K562 (cell line): ENCODE measurements at regions of chr19 and their contacts with region 1.

Region 1: GRCh38 chr19:7943444-7944176 is at the start of gene TIMM44:
- DNase-seq: peak; percentile 97 to 99 (median 98)
- ATAC-seq: peak; percentile 99
- H3K4me3 ChIP-seq: peak within 1 kb of the TSS; percentile 64
- H3K27ac ChIP-seq: peak within 1 kb of the TSS; percentile 94
- H3K4me1 ChIP-seq: peaks cover 11 to 28% of the 10 kb centered on the region in 2 experiments; a peak in 4 of 5 replicates
- H3K27me3 ChIP-seq: no peaks in the 10 kb centered on the region
- CTCF ChIP-seq: no peak
- EP300 ChIP-seq: peak; percentile 2; the same call in 1 of the 2 replicates
- POLR2A ChIP-seq: peak; percentile 95
- RAD21 ChIP-seq: peak in 1 of 2 experiments; percentile 6; a peak in 1 of 4 replicates
- polyA plus RNA-seq, gene TIMM44: 10.3 to 19.6 TPM

Region 2: DNA sequence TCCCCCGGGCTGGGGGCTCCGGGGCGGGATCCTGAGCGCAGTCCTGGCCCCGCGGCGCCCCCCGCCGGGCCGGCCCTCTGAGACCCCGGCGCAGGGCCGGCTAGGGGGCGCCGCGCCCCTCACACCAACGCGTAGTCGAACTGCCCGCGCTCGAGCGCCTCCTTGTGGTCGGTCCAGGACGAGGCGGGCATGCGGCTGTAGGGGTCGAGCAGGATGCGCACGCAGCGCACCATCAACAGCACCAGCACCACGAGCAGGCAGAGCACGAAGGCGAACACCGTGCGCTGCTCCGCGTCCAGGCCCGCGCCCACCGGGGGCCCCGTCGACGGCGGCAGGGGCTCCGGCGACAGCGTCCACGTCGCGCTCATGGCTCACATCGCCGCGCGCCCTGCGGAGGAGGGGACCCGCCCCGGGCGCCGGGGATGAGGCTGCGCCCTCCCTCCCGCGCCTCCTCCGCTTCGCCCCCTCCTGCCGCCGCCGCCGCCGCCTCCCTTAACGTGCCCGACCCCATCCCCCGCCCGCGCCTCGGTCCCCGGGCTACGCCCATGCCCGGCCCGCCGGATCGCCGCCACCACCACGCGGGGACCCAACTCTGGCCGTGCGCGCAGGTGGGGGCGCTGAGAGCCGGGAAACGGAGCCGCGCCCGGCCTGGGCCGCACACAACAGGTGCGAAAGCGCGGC is 18.3 kb before region 1 on chr19:
- CTCF ChIA-PET with region 1: no interaction called
- POLR2A ChIA-PET with region 1: interaction called, 27 read pairs
- in situ Hi-C with region 1: no loop called
- intact Hi-C with region 1: no loop called
- DNase-seq: peak; percentile 75 to 93 (median 84)
- ATAC-seq: peak; percentile 57
- H3K4me3 ChIP-seq: peak overlapping the region; percentile 48
- H3K27ac ChIP-seq: peak overlapping the region; percentile 48; the same call in 1 of the 3 replicates
- H3K4me1 ChIP-seq: peaks cover 13 to 86% of the 10 kb centered on the region in 2 experiments
- H3K27me3 ChIP-seq: no peaks in the 10 kb centered on the region
- CTCF ChIP-seq: peak; percentile 90 to 98 (median 93)
- EP300 ChIP-seq: no peak
- POLR2A ChIP-seq: no peak
- RAD21 ChIP-seq: peak; percentile 52 to 77

Region 3: GRCh38 chr19:8001995-8002849 is 58.6 kb after region 1 on chr19:
- CTCF ChIA-PET with region 1: interaction called, 4 read pairs
- POLR2A ChIA-PET with region 1: interaction called, 8 read pairs
- in situ Hi-C with region 1: no loop called
- intact Hi-C with region 1: loop called (anchors 2 kb)
- DNase-seq: peak; percentile 80 to 92 (median 84)
- ATAC-seq: peak; percentile 86
- H3K4me3 ChIP-seq: peak overlapping the region; percentile 42
- H3K27ac ChIP-seq: peak overlapping the region; percentile 79
- H3K4me1 ChIP-seq: peaks cover 34 to 36% of the 10 kb centered on the region in 2 experiments
- H3K27me3 ChIP-seq: no peaks in the 10 kb centered on the region
- CTCF ChIP-seq: peak; percentile 95 to 99 (median 96)
- EP300 ChIP-seq: peak; percentile 45
- POLR2A ChIP-seq: no peak
- RAD21 ChIP-seq: peak; percentile 62 to 75

Region 4: DNA sequence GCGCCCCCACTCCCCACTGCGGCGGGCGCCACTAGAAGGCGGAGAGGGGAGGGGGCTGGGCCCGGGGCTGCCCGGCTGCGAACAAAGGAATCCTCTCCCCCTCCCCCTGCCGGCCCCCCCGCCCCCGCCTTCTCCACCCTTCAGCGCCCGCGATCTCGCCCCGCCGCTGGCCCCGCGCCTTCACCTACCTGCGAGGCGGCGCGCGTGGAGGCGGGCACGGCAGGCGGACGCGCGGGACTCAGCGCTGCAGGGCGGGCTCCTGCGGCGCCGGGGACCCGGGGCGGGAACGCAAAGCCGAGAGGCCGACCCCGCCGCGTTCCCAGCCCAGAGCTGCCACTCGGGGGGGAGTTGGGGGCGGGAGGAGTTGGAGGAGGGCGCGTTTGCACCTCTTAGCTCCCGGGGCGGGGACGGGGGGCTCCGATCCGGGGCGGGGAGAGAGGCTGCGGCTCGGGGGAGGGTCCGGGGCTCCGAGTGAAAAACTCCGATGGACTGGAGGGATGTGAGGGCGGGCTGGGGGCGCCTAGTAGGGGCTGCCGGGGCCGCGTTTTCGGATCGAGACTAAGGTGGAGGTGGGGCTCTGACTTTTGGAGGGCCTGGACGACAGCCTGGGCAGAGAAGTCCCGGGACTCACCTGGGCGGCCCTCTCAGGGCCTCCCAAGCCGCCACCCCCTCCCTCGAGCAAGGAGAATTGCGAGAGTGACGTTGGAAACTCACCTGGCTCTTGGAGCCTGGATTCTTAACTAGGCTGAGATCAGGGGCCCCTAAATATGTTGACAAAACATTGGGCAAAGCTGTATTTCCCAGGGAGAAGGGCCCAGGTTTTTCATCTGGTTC is 205.9 kb after region 1 on chr19 and contains the start of gene FBN3:
- CTCF ChIA-PET with region 1: no interaction called
- POLR2A ChIA-PET with region 1: interaction called, 4 read pairs
- in situ Hi-C with region 1: no loop called
- intact Hi-C with region 1: loop called (anchors 5 kb)
- DNase-seq: peak in 2 of 4 experiments; percentile 49 to 52
- ATAC-seq: no peak
- H3K4me3 ChIP-seq: no peak within 1 kb of the TSS
- H3K27ac ChIP-seq: no peak within 1 kb of the TSS
- H3K4me1 ChIP-seq: peaks cover 0 to 39% of the 10 kb centered on the region in 2 experiments; a peak in 3 of 5 replicates
- H3K27me3 ChIP-seq: peaks cover 39 to 56% of the 10 kb centered on the region in 2 experiments
- CTCF ChIP-seq: no peak
- EP300 ChIP-seq: no peak
- POLR2A ChIP-seq: no peak
- RAD21 ChIP-seq: no peak
- polyA plus RNA-seq, gene FBN3: 0.01 TPM in 1 of 2 experiments, not detected in the other